ENCODE measurements at regions of chr9 and their contacts with region 1.

Region 1: DNA sequence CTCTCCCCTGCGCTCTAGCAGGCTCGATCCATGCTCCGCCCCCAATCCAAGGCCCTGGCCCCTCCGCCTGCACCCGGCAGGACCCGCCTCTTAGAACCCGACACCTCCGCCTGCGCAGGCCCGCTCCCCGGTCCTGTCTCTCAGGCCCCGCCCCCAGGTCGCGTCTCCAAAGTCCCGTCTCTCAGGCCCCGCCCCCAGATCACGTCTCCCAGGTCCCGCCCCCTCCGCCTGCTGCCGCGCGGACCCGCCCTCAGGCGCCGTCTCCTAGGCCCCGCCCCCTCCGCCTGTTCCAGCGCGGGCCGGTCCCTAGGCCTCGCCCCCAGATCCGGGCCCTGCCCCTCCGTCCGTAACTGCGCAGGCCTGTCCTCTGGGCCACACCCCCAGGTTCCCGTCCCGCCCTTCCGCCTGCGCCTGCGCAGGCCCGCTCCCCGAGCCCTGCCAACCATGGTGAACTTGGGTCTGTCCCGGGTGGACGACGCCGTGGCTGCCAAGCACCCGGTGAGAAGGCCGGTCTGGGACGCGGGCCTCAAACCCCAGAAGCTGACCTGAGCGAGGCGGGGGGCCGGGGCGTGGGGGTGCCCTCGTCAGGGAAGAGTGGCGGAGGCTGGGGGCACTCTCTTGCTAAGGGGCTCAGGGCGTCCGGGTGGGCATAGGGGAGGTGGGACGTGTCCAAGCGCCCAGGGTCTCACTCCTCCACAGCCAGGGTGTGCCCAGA is at the start of gene TMEM141:
- DNase-seq: peak; percentile 100
- ATAC-seq: peak; percentile 91 to 94 (median 94)
- H3K4me3 ChIP-seq: peak within 1 kb of the TSS; percentile 82
- H3K27ac ChIP-seq: peak within 1 kb of the TSS; percentile 92
- H3K4me1 ChIP-seq: peaks cover 21% of the 10 kb centered on the region
- H3K27me3 ChIP-seq: no peaks in the 10 kb centered on the region
- CTCF ChIP-seq: no peak
- total RNA-seq, gene TMEM141: 32.0 to 49.1 (median 45.9) TPM

Region 2: GRCh38 chr9:136807281-136808074 is 16.4 kb after region 1 on chr9 and contains the start of gene RABL6:
- intact Hi-C with region 1: loop called in 1 of 2 experiments (anchors 1 kb)
- DNase-seq: peak; percentile 81 to 90
- ATAC-seq: peak; percentile 89 to 95 (median 92)
- H3K4me3 ChIP-seq: peak within 1 kb of the TSS; percentile 94
- H3K27ac ChIP-seq: peak within 1 kb of the TSS; percentile 87
- H3K4me1 ChIP-seq: peaks cover 36% of the 10 kb centered on the region
- H3K27me3 ChIP-seq: no peaks in the 10 kb centered on the region
- CTCF ChIP-seq: no peak
- total RNA-seq, gene RABL6: 74.4 to 90.5 (median 88.3) TPM

Region 3: DNA sequence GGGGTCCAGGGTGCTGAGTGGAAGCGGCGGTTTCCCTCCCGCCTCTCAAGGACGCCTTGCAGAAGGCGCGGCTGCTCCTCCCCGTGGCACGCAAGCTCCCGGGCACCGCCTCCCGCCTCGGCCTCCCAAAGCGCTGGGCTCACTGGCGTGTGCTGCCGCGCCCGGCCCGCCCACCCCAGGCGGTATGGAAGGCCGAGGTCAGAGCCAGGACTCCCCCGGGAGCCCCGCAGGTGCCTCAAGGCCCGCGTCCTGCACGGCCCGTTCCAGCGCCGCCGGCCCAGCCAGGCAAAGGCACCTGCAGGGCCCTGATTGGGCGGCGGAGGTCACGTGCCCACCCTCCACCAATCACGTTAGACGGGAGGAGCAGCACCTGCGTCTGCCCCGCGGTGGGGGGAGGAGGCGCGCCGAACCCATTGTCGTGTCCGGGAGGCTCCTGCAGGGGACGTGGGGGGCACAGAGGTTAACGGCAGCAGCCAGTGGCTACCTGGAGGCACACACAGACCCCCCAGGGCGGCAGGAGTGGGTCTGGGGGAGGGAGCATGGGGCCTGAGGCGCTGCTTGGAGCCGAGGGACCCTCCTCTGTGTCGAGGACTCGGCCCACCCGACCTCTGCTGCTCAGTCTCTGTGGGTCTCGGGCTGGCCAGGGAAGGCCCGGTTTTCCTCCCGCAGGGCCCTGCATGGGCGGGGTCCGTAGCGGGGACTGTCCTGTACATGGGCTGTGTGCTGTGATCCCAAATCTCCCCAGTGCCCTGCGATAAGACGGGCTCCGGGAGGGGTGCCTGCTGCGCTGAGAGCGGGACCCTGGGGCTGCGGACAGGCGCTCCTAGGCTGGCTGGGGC is 159.0 kb after region 1 on chr9:
- intact Hi-C with region 1: loop called in 1 of 2 experiments (anchors 5 kb)
- DNase-seq: peak; percentile 94 to 96
- ATAC-seq: peak; percentile 87 to 93 (median 89)
- H3K4me3 ChIP-seq: peak overlapping the region; percentile 85
- H3K27ac ChIP-seq: peak overlapping the region; percentile 87
- H3K4me1 ChIP-seq: peaks cover 20% of the 10 kb centered on the region
- H3K27me3 ChIP-seq: no peaks in the 10 kb centered on the region
- CTCF ChIP-seq: no peak

Region 4: GRCh38 chr9:137034863-137035761 is 244.0 kb after region 1 on chr9:
- intact Hi-C with region 1: loop called (anchors 1 to 2 kb)
- DNase-seq: peak; percentile 78 to 92
- ATAC-seq: peak; percentile 74 to 94 (median 92)
- H3K4me3 ChIP-seq: no peak overlapping the region
- H3K27ac ChIP-seq: no peak overlapping the region
- H3K4me1 ChIP-seq: peaks cover 6% of the 10 kb centered on the region
- H3K27me3 ChIP-seq: peaks cover 0 to 6% (median 0%) of the 10 kb centered on the region in 3 donors
- CTCF ChIP-seq: peak; percentile 88

Region 5: DNA sequence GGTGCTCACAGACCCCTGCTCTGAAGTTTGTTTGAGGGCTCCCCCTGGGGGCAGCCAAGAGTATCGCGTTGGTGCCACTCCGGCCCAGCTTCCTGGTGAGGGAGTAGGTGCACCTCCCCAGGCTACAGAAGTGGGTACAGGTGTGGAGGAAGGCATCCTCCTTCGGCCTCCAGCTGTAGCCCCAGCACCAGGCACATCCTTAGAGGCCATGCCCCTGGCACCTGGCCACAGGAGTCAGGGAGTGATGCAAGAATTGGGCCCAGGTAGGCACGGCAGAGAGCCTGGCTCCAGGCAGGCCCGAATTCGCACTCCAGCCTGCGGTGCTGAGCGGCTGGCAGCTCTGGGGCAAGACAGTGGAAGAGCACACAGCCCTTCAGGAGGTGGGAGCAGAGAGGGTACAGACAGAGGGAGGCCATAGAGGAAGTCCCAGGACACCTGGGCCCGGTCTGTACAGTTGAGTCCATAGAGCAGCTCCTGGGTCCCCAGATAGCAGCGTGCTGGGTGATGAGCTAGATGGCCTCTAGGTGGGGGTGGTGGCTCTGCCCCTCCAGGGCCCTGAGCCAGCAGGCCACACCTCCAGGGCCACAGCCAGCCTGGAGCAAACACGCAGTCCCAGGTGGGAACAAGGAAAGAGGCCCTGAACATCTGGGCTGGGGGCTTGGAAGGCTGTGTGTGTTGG is 276.9 kb after region 1 on chr9:
- intact Hi-C with region 1: loop called (anchors 10 kb)
- DNase-seq: peak; percentile 74 to 87
- ATAC-seq: peak; percentile 55 to 71 (median 66)
- H3K4me3 ChIP-seq: no peak overlapping the region
- H3K27ac ChIP-seq: no peak overlapping the region
- H3K4me1 ChIP-seq: peaks cover 4% of the 10 kb centered on the region
- H3K27me3 ChIP-seq: peaks cover 0 to 10% (median 5%) of the 10 kb centered on the region in 3 donors
- CTCF ChIP-seq: peak; percentile 73